K562 (cell line): ENCODE measurements at regions of chr22 and their contacts with region 1.

Region 1: DNA sequence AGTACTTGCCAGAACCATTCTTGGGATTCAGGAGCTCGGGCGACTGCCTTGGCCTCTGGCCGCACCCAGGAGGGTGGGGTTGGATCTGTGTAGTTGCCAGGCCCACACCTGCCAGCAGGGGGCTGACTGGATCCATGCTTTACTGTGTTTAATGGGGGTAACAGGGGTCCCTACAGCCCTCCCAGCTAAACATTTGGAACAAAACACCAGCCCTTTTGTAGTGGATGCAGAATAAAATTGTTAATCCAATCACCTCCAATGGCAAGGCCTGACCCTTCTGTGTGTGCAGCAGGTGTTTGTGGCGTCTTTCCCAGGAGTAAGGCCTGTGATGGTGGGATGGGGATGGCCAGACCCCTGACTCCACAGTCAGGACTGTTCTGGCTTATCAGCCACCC is 22.5 kb downstream of the SUN2 start:
- DNase-seq: peak; percentile 46 to 59 (median 56)
- ATAC-seq: peak; percentile 84
- H3K4me3 ChIP-seq: no peak overlapping the region
- H3K27ac ChIP-seq: no peak overlapping the region
- H3K4me1 ChIP-seq: peaks cover 0 to 9% of the 10 kb centered on the region in 2 experiments; a peak in 2 of 5 replicates
- H3K27me3 ChIP-seq: no peaks in the 10 kb centered on the region
- CTCF ChIP-seq: peak; percentile 59 to 81 (median 60)
- EP300 ChIP-seq: no peak
- POLR2A ChIP-seq: no peak
- RAD21 ChIP-seq: peak in 1 of 2 experiments; percentile 29; a peak in 1 of 4 replicates

Region 2: GRCh38 chr22:38744981-38745380 is 11.7 kb after region 1 on chr22:
- CTCF ChIA-PET with region 1: no interaction called
- POLR2A ChIA-PET with region 1: interaction called, 24 read pairs
- in situ Hi-C with region 1: no loop called
- intact Hi-C with region 1: no loop called
- DNase-seq: no peak
- ATAC-seq: no peak
- H3K4me3 ChIP-seq: no peak overlapping the region
- H3K27ac ChIP-seq: no peak overlapping the region
- H3K4me1 ChIP-seq: no peaks in the 10 kb centered on the region
- H3K27me3 ChIP-seq: no peaks in the 10 kb centered on the region
- CTCF ChIP-seq: no peak
- EP300 ChIP-seq: no peak
- POLR2A ChIP-seq: no peak
- RAD21 ChIP-seq: no peak